WTC11 (cell line): ENCODE measurements at regions of chr3 and their contacts with region 1.

Region 1: GRCh38 chr3:16884084-16884747 is 539 bp upstream of the PLCL2 start:
- DNase-seq: peak; percentile 91
- ATAC-seq: peak; percentile 86
- H3K4me3 Mint-ChIP-seq: peak overlapping the region; percentile 75
- H3K27ac Mint-ChIP-seq: no peak overlapping the region
- H3K4me1 Mint-ChIP-seq: peaks cover 51% of the 10 kb centered on the region
- H3K27me3 Mint-ChIP-seq: peaks cover 57% of the 10 kb centered on the region
- CTCF ChIP-seq: peak; percentile 57

Region 2: GRCh38 chr3:16589867-16590624 is 294.2 kb before region 1 on chr3:
- CTCF ChIA-PET with region 1: no interaction called
- POLR2A ChIA-PET with region 1: no interaction called
- DNase-seq: no peak
- ATAC-seq: no peak
- H3K4me3 Mint-ChIP-seq: no peak overlapping the region
- H3K27ac Mint-ChIP-seq: no peak overlapping the region
- H3K4me1 Mint-ChIP-seq: no peaks in the 10 kb centered on the region
- H3K27me3 Mint-ChIP-seq: no peaks in the 10 kb centered on the region; the same call in 1 of the 2 replicates
- CTCF ChIP-seq: no peak

Region 3: GRCh38 chr3:16600780-16601539 is 283.3 kb before region 1 on chr3:
- CTCF ChIA-PET with region 1: interaction called, 17 read pairs
- POLR2A ChIA-PET with region 1: no interaction called
- DNase-seq: peak; percentile 78
- ATAC-seq: peak; percentile 46; the same call in 1 of the 2 replicates
- H3K4me3 Mint-ChIP-seq: no peak overlapping the region
- H3K27ac Mint-ChIP-seq: no peak overlapping the region
- H3K4me1 Mint-ChIP-seq: peaks cover 27% of the 10 kb centered on the region
- H3K27me3 Mint-ChIP-seq: no peaks in the 10 kb centered on the region
- CTCF ChIP-seq: peak; percentile 67

Region 4: DNA sequence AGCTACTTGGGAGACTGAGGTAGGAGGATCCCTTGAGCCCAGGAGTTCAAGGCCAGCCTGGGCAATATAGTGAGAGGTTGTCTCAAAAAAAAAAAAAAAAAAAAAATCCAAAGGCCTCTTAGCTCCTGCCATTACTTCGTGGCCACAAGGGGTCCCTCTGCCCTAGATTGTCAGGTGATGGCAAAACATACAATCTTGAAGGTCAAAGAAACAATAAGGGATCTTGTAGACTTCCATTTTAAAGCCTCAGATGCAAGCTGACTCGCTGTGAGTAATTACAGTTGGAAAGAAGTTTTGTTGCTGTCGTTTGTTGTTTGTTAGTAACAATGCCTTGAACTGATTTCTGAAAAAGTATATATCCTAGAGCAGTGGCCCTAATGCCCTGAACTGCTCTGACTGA is 55.4 kb before region 1 on chr3:
- CTCF ChIA-PET with region 1: interaction called, 23 read pairs
- POLR2A ChIA-PET with region 1: interaction called, 3 read pairs
- DNase-seq: peak; percentile 45
- ATAC-seq: peak; percentile 89
- H3K4me3 Mint-ChIP-seq: no peak overlapping the region
- H3K27ac Mint-ChIP-seq: no peak overlapping the region
- H3K4me1 Mint-ChIP-seq: peaks cover 23% of the 10 kb centered on the region
- H3K27me3 Mint-ChIP-seq: no peaks in the 10 kb centered on the region
- CTCF ChIP-seq: peak; percentile 22; the same call in 1 of the 2 replicates

Region 5: GRCh38 chr3:16871915-16872842 is 12.0 kb before region 1 on chr3:
- CTCF ChIA-PET with region 1: interaction called, 44 read pairs
- POLR2A ChIA-PET with region 1: no interaction called
- DNase-seq: no peak
- ATAC-seq: peak; percentile 72
- H3K4me3 Mint-ChIP-seq: no peak overlapping the region
- H3K27ac Mint-ChIP-seq: no peak overlapping the region
- H3K4me1 Mint-ChIP-seq: no peaks in the 10 kb centered on the region
- H3K27me3 Mint-ChIP-seq: no peaks in the 10 kb centered on the region; the same call in 1 of the 2 replicates
- CTCF ChIP-seq: no peak

Region 6: DNA sequence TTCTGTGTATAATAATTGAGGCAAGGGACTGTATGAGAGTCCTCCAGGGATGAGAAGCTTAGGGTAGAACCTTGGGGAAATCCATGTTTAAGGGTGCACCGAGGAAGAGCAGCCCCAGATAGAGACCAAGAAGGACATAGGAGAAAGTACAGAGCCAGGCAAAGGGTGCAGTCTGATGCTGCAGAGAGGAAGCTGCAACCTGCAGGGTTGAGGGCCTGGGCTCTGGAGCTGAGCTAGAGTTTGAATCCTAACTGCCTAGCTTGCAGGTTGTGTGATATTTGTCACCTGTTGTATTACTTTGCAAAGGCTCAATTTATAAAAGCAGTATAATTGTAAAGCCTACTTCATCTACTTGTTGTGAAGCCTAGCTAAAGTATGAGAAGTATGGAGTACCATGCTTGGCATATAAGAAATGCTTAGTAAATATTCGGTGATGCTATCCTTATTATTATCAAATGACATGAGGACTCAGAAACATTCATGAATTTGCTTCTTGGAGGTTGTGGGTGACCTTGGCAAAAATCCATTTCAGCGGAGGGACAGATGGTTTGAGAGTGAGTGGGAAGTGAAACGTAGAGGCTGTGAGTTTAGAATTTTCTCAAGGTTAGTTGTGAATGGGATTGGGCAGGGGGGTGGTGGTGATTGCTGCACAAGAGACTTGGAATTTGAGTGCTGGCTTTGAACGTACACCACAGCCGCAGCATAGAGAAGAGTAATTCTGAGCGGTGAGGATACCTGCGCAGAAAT is 44.3 kb after region 1 on chr3:
- CTCF ChIA-PET with region 1: interaction called, 12 read pairs
- POLR2A ChIA-PET with region 1: no interaction called
- DNase-seq: no peak
- ATAC-seq: no peak
- H3K4me3 Mint-ChIP-seq: no peak overlapping the region
- H3K27ac Mint-ChIP-seq: no peak overlapping the region
- H3K4me1 Mint-ChIP-seq: peaks cover 14% of the 10 kb centered on the region
- H3K27me3 Mint-ChIP-seq: no peaks in the 10 kb centered on the region; the same call in 1 of the 2 replicates
- CTCF ChIP-seq: no peak

Region 7: DNA sequence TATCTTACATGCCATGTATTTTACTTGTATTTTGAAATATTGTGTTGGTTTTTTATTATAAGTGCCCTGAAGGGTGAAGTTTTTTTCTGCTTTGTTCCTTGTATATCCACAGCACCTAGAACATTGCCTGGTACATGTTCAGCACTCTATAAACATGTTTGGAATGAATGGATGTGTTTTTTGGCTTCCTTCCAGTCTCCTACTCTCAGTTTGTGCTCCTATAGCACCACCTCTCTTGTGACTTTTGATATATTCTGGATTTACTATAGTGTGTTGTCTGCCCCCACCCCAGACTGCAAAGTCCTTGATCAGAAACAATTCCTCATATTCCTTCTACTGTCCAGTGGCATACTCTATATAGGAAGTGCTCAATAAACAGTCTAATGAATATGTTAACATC is 61.1 kb after region 1 on chr3:
- CTCF ChIA-PET with region 1: no interaction called
- POLR2A ChIA-PET with region 1: no interaction called
- DNase-seq: no peak
- ATAC-seq: no peak
- H3K4me3 Mint-ChIP-seq: no peak overlapping the region
- H3K27ac Mint-ChIP-seq: no peak overlapping the region
- H3K4me1 Mint-ChIP-seq: peaks cover under 1% of the 10 kb centered on the region; the same call in 1 of the 2 replicates
- H3K27me3 Mint-ChIP-seq: no peaks in the 10 kb centered on the region
- CTCF ChIP-seq: no peak